Endothelial cell of umbilical vein (primary cell): ENCODE measurements at regions of chr14 and their contacts with region 1.

Region 1: DNA sequence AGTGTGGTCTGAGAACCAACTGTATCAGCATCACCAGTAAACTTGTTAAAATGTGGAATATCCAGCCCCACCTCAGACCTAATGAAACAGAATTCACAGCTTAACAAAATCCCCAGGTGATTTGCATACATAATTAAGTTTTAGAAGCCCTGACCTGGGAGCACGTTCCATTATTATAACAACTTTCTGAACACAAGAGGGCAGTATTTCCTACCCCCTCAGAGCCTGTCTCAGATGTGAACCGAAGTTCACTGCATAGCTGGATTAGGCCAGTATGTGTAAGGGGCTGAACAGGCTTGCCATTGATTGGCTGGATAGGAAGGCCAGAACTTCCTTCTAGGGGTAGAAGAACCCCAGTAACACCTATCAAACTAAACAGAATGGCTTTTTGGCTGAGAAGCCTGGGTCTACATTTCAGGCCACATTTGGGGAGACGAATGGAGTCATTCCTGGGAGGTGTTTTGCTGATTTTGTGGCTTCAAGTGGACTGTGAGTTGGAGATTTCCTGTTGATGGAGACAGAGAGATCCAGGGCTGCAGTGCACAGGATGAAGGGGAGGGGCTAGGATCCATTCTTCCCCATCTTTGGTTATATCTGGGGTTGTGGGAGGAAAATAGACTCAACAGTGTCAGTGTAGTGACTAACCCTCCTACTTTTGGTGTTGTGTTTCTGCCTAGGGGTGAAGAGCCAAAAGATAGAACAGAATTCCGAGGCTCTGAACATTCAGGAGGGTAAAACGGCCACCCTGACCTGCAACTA is 94.7 kb upstream of the OR4E1 start:
- DNase-seq: peak; percentile 38
- H3K4me3 ChIP-seq: no peak overlapping the region
- H3K27ac ChIP-seq: no peak overlapping the region
- H3K4me1 ChIP-seq: no peaks in the 10 kb centered on the region
- H3K27me3 ChIP-seq: peaks cover 1 to 3% of the 10 kb centered on the region in 2 experiments
- CTCF ChIP-seq: peak; percentile 45 to 46
- POLR2A ChIP-seq: no peak

Region 2: GRCh38 chr14:21748869-21749303 is 19.4 kb before region 1 on chr14:
- CTCF ChIA-PET with region 1: interaction called, 11 read pairs
- POLR2A ChIA-PET with region 1: no interaction called
- dilution Hi-C with region 1: no loop called
- intact Hi-C with region 1: no loop called
- DNase-seq: peak; percentile 46
- H3K4me3 ChIP-seq: no peak overlapping the region
- H3K27ac ChIP-seq: no peak overlapping the region
- H3K4me1 ChIP-seq: no peaks in the 10 kb centered on the region
- H3K27me3 ChIP-seq: peaks cover 0 to 19% of the 10 kb centered on the region in 2 experiments
- CTCF ChIP-seq: peak; percentile 62 to 73
- POLR2A ChIP-seq: no peak

Region 3: DNA sequence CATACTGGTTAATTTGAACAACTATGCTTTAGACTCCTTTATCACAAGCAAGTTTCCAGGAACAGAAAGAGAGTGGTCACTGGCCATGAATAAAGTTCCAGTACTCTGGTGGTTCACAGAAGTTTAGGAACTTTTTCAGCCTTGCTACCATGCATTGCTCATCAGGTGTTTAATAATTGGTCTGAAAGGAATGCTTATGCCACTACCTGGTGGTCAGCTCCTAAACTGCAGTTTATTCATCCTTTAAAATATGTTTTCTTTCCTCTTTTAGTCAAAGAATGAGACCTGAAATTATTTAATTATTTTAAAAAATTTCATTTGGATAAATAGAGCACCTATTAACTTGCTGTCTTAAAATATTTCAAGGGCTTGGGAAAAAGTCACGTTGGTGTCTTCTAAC is 165.4 kb after region 1 on chr14:
- CTCF ChIA-PET with region 1: no interaction called
- POLR2A ChIA-PET with region 1: no interaction called
- dilution Hi-C with region 1: no loop called
- intact Hi-C with region 1: no loop called
- DNase-seq: peak; percentile 53
- H3K4me3 ChIP-seq: no peak overlapping the region
- H3K27ac ChIP-seq: no peak overlapping the region
- H3K4me1 ChIP-seq: no peaks in the 10 kb centered on the region
- H3K27me3 ChIP-seq: no peaks in the 10 kb centered on the region
- CTCF ChIP-seq: peak; percentile 35 to 52
- POLR2A ChIP-seq: no peak